A549 (cell line): ENCODE measurements at regions of chr12 and their contacts with region 1.

Region 1: DNA sequence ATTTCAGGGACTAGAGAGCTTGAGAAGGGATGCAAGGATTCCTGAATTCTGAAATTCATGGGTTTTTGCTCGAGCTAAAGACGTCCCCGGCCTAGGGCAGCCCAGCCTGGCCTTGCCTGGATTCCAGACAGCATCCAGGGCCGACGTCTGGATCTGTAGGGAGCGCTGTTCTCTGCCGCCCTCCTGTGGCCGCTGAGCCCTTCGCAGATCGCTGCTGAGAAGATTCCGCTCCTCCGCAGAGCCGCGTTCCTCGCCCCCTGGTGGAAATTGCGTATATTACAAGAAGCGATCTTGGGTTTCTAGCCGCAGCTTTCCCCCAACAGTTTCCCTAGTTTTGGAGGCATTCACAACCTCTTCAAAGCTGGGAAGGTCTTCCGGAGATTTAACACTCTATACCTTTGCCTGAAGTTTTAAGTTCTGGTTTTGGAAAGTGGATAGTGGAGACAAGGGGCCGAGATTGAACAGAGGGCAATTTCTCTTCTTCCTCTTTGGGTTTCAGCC is 5.1 kb downstream of the CISTR start:
- DNase-seq: peak; percentile 88 to 91
- ATAC-seq: peak; percentile 92 to 95
- H3K4me3 ChIP-seq: no peak overlapping the region
- H3K27ac ChIP-seq: peak overlapping the region in 1 of 2 experiments; percentile 49; a peak in 1 of 6 replicates
- H3K4me1 ChIP-seq: no peaks in the 10 kb centered on the region
- CTCF ChIP-seq: peak; percentile 100
- EP300 ChIP-seq: no peak
- POLR2A ChIP-seq: no peak
- RAD21 ChIP-seq: peak; percentile 87 to 90

Region 2: GRCh38 chr12:53543539-53543938 is 203.1 kb before region 1 on chr12:
- CTCF ChIA-PET with region 1: interaction called, 18 read pairs
- POLR2A ChIA-PET with region 1: no interaction called
- DNase-seq: peak; percentile 74 to 81
- ATAC-seq: peak; percentile 97 to 99
- H3K4me3 ChIP-seq: no peak overlapping the region
- H3K27ac ChIP-seq: peak overlapping the region; percentile 45 to 53
- H3K4me1 ChIP-seq: peaks cover 23% of the 10 kb centered on the region
- CTCF ChIP-seq: peak; percentile 93
- EP300 ChIP-seq: no peak
- POLR2A ChIP-seq: no peak
- RAD21 ChIP-seq: peak; percentile 92 to 94

Region 3: GRCh38 chr12:53701518-53702260 is 45.0 kb before region 1 on chr12:
- CTCF ChIA-PET with region 1: interaction called, 833 read pairs
- POLR2A ChIA-PET with region 1: no interaction called
- DNase-seq: peak; percentile 76 to 84
- ATAC-seq: peak; percentile 94 to 98
- H3K4me3 ChIP-seq: no peak overlapping the region
- H3K27ac ChIP-seq: no peak overlapping the region
- H3K4me1 ChIP-seq: no peaks in the 10 kb centered on the region
- CTCF ChIP-seq: peak; percentile 96
- EP300 ChIP-seq: no peak
- POLR2A ChIP-seq: no peak
- RAD21 ChIP-seq: peak; percentile 95 to 98

Region 4: DNA sequence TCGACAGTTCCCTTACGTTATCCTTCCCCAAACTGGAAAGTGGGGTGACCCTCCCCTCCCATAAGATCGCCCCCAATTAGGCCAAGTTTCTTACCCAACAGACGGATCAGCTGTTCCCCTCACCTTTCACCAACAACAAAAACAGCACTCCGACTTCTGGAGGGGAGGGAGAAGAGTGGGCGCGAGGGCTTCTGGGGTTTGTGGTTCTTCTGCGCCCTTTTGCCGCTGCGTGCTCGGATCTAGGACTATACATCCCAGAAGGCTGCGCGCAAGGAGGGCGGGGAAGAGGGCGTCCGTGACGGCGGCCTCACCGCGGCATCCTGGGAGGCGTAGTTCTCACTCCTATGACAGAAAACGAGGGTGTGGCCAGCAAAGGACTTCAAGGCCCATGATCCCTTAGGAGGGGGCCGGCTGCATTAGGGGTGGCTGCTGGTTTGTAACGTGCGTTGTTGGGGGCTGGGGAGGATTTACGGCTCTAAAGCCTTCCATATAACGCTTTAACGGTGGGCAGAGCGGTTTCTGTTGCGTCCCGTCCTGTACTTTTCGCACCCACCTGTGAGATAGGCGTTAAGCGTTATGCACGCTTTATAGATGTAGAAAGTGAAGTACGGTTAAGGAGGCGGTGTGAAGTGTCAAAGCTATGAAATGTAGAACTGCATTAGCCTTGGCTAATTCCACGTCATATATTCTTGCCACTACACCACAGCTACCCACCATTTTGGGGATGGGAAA is 19.2 kb before region 1 on chr12 and contains the start of gene CALCOCO1:
- CTCF ChIA-PET with region 1: interaction called, 447 read pairs
- POLR2A ChIA-PET with region 1: no interaction called
- DNase-seq: peak; percentile 98 to 99
- ATAC-seq: peak; percentile 99 to 100
- H3K4me3 ChIP-seq: peak within 1 kb of the TSS; percentile 64
- H3K27ac ChIP-seq: peak within 1 kb of the TSS; percentile 72 to 76
- H3K4me1 ChIP-seq: peaks cover 12% of the 10 kb centered on the region
- CTCF ChIP-seq: no peak
- EP300 ChIP-seq: no peak
- POLR2A ChIP-seq: peak; percentile 64
- RAD21 ChIP-seq: no peak
- polyA plus RNA-seq, gene CALCOCO1: 41.5 and 54.5 TPM in 2 replicates

Region 5: GRCh38 chr12:53770281-53770680 is 23.6 kb after region 1 on chr12:
- CTCF ChIA-PET with region 1: interaction called, 28 read pairs
- POLR2A ChIA-PET with region 1: no interaction called
- DNase-seq: peak; percentile 21 to 66
- ATAC-seq: peak in 1 of 2 experiments; percentile 68; a peak in 3 of 6 replicates
- H3K4me3 ChIP-seq: no peak overlapping the region
- H3K27ac ChIP-seq: peak overlapping the region; percentile 43 to 56; a peak in 4 of 6 replicates
- H3K4me1 ChIP-seq: peaks cover 21% of the 10 kb centered on the region
- CTCF ChIP-seq: no peak
- EP300 ChIP-seq: no peak
- POLR2A ChIP-seq: no peak
- RAD21 ChIP-seq: peak in 1 of 2 experiments; percentile 17; a peak in 2 of 5 replicates

Region 6: GRCh38 chr12:53798575-53798974 is 51.9 kb after region 1 on chr12:
- CTCF ChIA-PET with region 1: interaction called, 13 read pairs
- POLR2A ChIA-PET with region 1: no interaction called
- DNase-seq: peak; percentile 19 to 47
- ATAC-seq: peak; percentile 55 to 66; a peak in 4 of 6 replicates
- H3K4me3 ChIP-seq: no peak overlapping the region
- H3K27ac ChIP-seq: peak overlapping the region; percentile 40 to 64; a peak in 5 of 6 replicates
- H3K4me1 ChIP-seq: peaks cover 25% of the 10 kb centered on the region
- CTCF ChIP-seq: no peak
- EP300 ChIP-seq: no peak
- POLR2A ChIP-seq: no peak
- RAD21 ChIP-seq: no peak